ENCODE measurements at regions of chr6 and their contacts with region 1.

Region 1: GRCh38 chr6:54020334-54020733 is 90.9 kb upstream of the MLIP start:
- DNase-seq: peak in 1 of 2 donors; percentile 34
- ATAC-seq: peak; percentile 59 to 68
- H3K4me3 ChIP-seq: peak overlapping the region; percentile 57 to 66 (median 65)
- H3K27ac ChIP-seq: peak overlapping the region; percentile 89 to 92 (median 90)
- H3K4me1 ChIP-seq: peaks cover 30 to 31% of the 10 kb centered on the region in 2 donors
- H3K27me3 ChIP-seq: no peaks in the 10 kb centered on the region
- CTCF ChIP-seq: no peak
- POLR2A ChIP-seq: peak in 1 of 2 donors; percentile 57

Region 2: DNA sequence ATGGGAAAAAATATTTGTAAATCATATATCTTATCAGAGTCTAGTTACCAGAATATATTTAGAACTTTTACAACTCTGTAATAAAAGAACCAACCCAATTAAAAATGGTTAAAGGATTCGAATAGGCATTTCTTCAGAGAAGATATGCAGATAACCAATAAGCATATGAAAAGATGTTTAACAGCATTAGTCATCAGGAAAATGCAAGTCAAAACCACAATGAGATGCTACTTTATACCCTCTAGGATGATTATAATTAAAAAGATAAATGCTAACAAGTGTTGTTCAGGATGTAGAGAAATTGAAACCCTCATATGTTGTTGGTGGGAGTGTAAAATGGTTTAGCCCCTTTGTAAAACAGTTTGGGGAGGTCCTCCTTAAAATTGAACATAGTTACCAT is 131.4 kb before region 1 on chr6:
- in situ Hi-C with region 1: no loop called
- intact Hi-C with region 1: no loop called
- DNase-seq: no peak
- ATAC-seq: no peak
- H3K4me3 ChIP-seq: no peak overlapping the region
- H3K27ac ChIP-seq: no peak overlapping the region
- H3K4me1 ChIP-seq: no peaks in the 10 kb centered on the region
- H3K27me3 ChIP-seq: no peaks in the 10 kb centered on the region
- CTCF ChIP-seq: no peak
- POLR2A ChIP-seq: no peak

Region 3: GRCh38 chr6:54053881-54054391 is 33.6 kb after region 1 on chr6:
- in situ Hi-C with region 1: no loop called
- intact Hi-C with region 1: loop called (anchors 1 kb)
- DNase-seq: peak; percentile 76 to 80
- ATAC-seq: peak; percentile 95 to 96
- H3K4me3 ChIP-seq: peak overlapping the region; percentile 30 to 46 (median 36)
- H3K27ac ChIP-seq: peak overlapping the region; percentile 85 to 94 (median 92)
- H3K4me1 ChIP-seq: peaks cover 79 to 96% of the 10 kb centered on the region in 2 donors
- H3K27me3 ChIP-seq: no peaks in the 10 kb centered on the region
- CTCF ChIP-seq: no peak
- POLR2A ChIP-seq: peak; percentile 7 to 73

Region 4: GRCh38 chr6:54085541-54085940 is 65.2 kb after region 1 on chr6:
- in situ Hi-C with region 1: no loop called
- intact Hi-C with region 1: loop called (anchors 2 kb)
- DNase-seq: peak; percentile 38 to 75
- ATAC-seq: peak; percentile 57 to 61
- H3K4me3 ChIP-seq: peak overlapping the region in 3 of 4 donors; percentile 8 to 57 (median 52)
- H3K27ac ChIP-seq: peak overlapping the region; percentile 90 to 97 (median 94)
- H3K4me1 ChIP-seq: peaks cover 58 to 67% of the 10 kb centered on the region in 2 donors
- H3K27me3 ChIP-seq: no peaks in the 10 kb centered on the region
- CTCF ChIP-seq: no peak
- POLR2A ChIP-seq: no peak

Measured in gastrocnemius medialis (tissue), 4 donors.